HEK293T (cell line): ENCODE measurements at regions of chr16 and their contacts with region 1.

Region 1: DNA sequence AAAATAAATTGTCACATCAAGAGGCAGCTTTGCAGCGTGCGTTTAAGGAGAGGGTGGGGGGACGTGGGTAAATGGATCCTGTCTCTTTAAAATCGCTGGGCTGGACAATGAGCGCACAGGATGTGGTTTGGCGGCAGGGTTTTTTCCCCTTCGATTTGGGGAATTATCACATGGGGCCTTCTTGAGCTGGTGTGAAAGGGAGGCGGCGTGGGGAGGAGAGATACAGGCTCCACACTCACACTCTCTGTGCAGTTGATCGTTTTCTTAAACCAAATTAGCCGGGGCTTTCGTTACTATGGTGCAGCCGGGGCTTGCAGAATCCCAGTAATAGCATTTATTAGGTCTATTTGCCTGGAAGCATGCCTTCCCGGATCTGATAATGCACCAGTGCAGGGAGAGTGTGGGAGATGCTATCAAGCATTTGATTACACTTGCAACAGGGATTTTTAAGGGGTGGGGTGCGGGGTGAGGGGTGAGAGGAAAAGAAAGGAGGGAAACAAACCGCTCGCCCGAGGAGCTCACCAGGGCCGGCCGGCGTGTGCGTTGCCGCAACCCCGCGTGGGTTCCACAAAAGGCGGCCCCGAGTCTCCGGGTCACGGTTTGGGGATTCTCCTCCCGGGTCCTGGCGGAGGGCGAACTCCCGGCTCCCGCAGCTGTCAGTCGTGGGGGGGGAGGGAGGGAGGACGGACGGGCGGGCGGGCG is 58.9 kb upstream of the GSE1 start:
- DNase-seq: peak; percentile 57

Region 2: GRCh38 chr16:85528528-85529387 is 25.5 kb before region 1 on chr16:
- CTCF ChIA-PET with region 1: interaction called, 3 read pairs
- POLR2A ChIA-PET with region 1: interaction called, 11 read pairs
- DNase-seq: peak; percentile 54